Spleen (tissue), 13 donors: ENCODE measurements at regions of chr22 and their contacts with region 1.

Region 1: DNA sequence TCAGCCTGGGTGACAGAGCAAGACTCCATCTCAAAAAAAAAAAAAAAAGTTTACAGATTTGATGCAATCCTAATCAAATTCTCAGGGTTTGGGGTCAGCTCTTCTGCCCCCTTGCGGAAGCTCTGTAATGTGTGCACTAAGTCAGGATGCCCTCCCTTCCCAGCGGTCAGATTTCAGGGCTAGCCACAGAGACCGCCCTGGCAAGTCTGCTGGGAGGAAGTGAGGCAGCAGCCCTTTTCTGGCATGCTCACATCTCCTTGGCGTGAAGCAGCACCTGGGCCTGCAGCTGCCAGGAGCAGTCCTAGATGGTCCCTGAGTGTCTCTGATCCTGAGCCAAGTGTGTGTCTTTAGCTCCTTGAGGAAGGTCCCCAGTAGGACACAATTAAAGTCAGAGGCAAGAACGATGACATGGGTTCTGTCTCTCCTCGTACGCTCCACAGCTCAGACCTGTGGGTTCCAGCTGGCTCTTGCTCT is 10.9 kb upstream of the APOBEC3C start:
- DNase-seq: peak; percentile 90
- H3K4me3 ChIP-seq: no peak overlapping the region
- H3K27ac ChIP-seq: peak overlapping the region in 2 of 8 donors; percentile 51 to 62
- H3K4me1 ChIP-seq: peaks cover 8 to 27% (median 11%) of the 10 kb centered on the region in 6 donors
- H3K27me3 ChIP-seq: peaks cover 0 to 8% (median 0%) of the 10 kb centered on the region in 7 donors
- CTCF ChIP-seq: peak; percentile 51 to 91 (median 81)
- POLR2A ChIP-seq: no peak

Region 2: DNA sequence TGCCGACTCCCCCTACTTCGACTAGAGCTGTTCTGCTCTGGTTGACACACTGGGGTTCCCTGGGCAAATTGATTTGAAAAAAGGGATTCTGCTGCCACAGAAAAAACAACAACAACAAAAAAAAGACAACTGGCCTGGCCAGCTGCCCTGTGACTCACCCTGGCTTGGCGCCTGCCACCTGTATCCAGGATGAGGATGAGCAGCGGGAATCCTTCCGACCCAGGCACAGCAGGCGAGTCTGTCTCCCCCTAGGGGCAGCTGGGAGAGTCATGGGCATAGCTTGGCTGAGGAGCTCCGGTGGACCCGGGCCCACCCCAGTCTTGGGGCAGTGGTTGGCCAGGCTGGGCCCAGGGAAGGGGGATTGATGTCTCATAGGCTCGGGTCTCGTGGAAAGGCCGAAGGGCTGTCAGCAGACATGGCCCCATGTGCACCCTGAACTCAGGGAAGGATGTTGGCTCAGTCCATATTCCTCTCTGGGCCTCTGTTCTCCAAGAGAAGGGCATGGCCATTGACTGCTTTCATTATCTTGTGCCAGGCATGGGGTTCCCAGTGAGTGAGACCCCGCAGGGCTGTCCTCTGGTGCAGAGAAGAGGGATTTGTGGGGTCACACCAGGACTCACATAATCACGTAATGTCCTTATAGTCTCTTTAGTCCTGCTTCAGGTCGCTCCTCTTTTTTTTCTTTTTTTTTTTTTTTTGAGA is 237.0 kb before region 1 on chr22:
- intact Hi-C with region 1: loop called (anchors 5 kb)
- DNase-seq: no peak
- H3K4me3 ChIP-seq: no peak overlapping the region
- H3K27ac ChIP-seq: no peak overlapping the region
- H3K4me1 ChIP-seq: peaks cover 0 to 25% (median 12%) of the 10 kb centered on the region in 6 donors
- H3K27me3 ChIP-seq: no peaks in the 10 kb centered on the region
- CTCF ChIP-seq: peak in 10 of 11 experiments; percentile 17 to 78 (median 65)
- POLR2A ChIP-seq: no peak

Region 3: GRCh38 chr22:38872172-38872830 is 130.9 kb before region 1 on chr22 and contains the start of gene CBX6:
- intact Hi-C with region 1: loop called (anchors 5 kb)
- DNase-seq: peak; percentile 98
- H3K4me3 ChIP-seq: peak within 1 kb of the TSS; percentile 59 to 91 (median 76)
- H3K27ac ChIP-seq: peak within 1 kb of the TSS; percentile 81 to 94 (median 90)
- H3K4me1 ChIP-seq: peaks cover 34 to 63% (median 47%) of the 10 kb centered on the region in 6 donors
- H3K27me3 ChIP-seq: peaks cover 0 to 5% (median 0%) of the 10 kb centered on the region in 7 donors
- CTCF ChIP-seq: no peak
- POLR2A ChIP-seq: peak in 1 of 3 donors; percentile 77
- total RNA-seq, gene CBX6: 35.8 to 72.2 (median 49.2) TPM

Region 4: DNA sequence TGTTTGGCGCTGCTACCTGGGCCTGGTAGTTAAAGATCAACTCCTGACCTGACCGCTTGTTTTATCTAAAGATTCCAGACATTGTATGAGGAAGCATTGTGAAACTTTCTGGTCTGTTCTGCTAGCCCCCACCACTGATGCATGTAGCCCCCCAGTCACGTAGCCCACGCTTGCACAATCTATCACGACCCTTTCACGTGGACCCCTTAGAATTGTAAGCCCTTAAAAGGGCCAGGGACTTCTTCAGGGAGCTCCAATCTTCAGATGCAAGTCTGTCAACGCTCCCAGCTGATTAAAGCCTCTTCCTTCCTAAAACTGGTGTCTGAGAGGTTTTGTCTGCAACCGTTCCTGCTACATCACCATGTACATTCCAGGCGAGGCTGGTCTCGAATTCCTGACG is 52.5 kb after region 1 on chr22:
- intact Hi-C with region 1: no loop called
- DNase-seq: no peak
- H3K4me3 ChIP-seq: no peak overlapping the region
- H3K27ac ChIP-seq: no peak overlapping the region
- H3K4me1 ChIP-seq: peaks cover 0 to 19% (median 5%) of the 10 kb centered on the region in 6 donors
- H3K27me3 ChIP-seq: no peaks in the 10 kb centered on the region
- CTCF ChIP-seq: no peak
- POLR2A ChIP-seq: no peak

Region 5: GRCh38 chr22:39117585-39118191 is 114.5 kb after region 1 on chr22:
- intact Hi-C with region 1: loop called (anchors 5 kb)
- DNase-seq: peak; percentile 83
- H3K4me3 ChIP-seq: peak overlapping the region in 2 of 8 donors; percentile 7 to 46
- H3K27ac ChIP-seq: peak overlapping the region in 7 of 8 donors; percentile 4 to 78 (median 54)
- H3K4me1 ChIP-seq: peaks cover 6 to 47% (median 41%) of the 10 kb centered on the region in 6 donors
- H3K27me3 ChIP-seq: no peaks in the 10 kb centered on the region
- CTCF ChIP-seq: peak; percentile 32 to 77 (median 68)
- POLR2A ChIP-seq: no peak

Region 6: DNA sequence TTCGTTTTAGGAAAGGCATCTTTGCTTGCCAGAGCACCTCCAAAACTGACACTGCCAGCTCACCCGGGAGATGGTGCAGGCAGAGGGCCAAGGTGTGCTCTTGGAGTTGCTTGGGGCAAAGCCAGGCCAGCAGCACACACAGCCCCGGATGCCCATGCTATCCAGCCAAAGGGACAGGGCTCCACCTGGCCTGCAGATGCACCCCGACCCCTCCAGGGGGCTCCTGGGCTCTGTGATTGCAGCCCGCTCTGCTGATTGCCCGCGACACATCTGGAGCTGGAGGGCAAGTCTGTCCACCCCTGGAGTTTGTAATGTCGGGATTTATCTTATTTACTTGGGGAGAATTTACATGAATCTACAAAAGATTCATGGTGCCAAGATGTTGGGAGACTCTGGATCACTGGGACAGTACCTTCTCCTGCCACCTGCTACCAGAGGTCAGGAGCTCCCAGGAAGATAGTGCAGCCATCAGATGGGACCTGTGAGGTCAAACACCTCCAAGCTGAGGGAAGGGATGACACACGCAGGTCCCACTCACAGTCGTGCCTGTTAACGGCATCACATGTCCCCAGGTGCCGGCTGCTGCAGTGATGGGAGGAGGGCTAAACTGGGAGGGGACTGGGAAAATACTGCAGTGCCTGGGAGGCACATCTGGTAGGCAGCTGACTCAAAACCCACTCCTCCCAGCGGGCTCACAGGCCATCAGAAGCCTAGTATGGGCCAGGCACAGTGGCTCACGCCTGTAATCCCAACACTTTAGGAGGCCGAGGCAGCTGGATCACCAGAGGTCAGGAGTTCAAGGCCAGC is 132.1 kb after region 1 on chr22:
- intact Hi-C with region 1: no loop called
- DNase-seq: peak; percentile 81
- H3K4me3 ChIP-seq: no peak overlapping the region
- H3K27ac ChIP-seq: no peak overlapping the region
- H3K4me1 ChIP-seq: peaks cover 0 to 22% (median 9%) of the 10 kb centered on the region in 6 donors
- H3K27me3 ChIP-seq: no peaks in the 10 kb centered on the region
- CTCF ChIP-seq: peak in 7 of 11 experiments; percentile 17 to 64 (median 45)
- POLR2A ChIP-seq: no peak

Region 7: DNA sequence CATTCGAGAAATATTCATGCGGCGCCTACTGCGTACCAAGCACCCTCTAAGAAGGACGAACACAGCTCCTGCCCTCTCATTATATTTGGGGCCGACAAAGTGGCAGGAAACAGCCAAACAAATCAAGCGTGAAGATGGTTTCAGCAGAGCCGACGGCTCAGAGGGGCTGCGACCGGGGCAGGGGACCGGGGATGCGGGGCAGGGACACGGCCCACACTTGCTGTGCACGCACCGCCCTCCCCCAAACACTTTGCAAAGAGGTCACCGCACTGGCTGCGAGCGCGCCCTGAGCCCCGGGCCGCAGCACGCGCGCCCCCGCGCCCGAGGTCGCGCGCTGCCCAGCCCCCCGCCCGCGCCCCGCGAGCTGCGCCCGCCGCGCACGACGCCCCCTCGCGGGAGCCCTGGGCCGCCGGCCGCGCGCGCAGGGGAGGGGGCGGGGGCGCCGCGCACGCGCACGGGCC is 346.3 kb after region 1 on chr22:
- intact Hi-C with region 1: no loop called
- DNase-seq: peak; percentile 79
- H3K4me3 ChIP-seq: peak overlapping the region; percentile 45 to 83 (median 54)
- H3K27ac ChIP-seq: peak overlapping the region in 6 of 8 donors; percentile 40 to 84 (median 70)
- H3K4me1 ChIP-seq: peaks cover 14 to 39% (median 35%) of the 10 kb centered on the region in 6 donors
- H3K27me3 ChIP-seq: peaks cover 0 to 14% (median 0%) of the 10 kb centered on the region in 7 donors
- CTCF ChIP-seq: peak in 1 of 11 experiments; percentile 6
- POLR2A ChIP-seq: no peak